ENCODE measurements at regions of chr3 and their contacts with region 1.

Region 1: GRCh38 chr3:72102112-72102616 is 317.2 kb upstream of the PROK2 start:
- DNase-seq: peak in 2 of 35 experiments; percentile 6 to 40
- ATAC-seq: no peak
- H3K4me3 ChIP-seq: no peak overlapping the region
- H3K4me3 Mint-ChIP-seq: no peak overlapping the region
- H3K27ac ChIP-seq: no peak overlapping the region
- H3K27ac Mint-ChIP-seq: no peak overlapping the region
- H3K4me1 ChIP-seq: peaks cover 13 to 15% of the 10 kb centered on the region in 2 experiments
- H3K4me1 Mint-ChIP-seq: peaks cover 24 to 30% (median 29%) of the 10 kb centered on the region in 3 donors
- H3K27me3 ChIP-seq: peaks cover 0 to 22% of the 10 kb centered on the region in 2 experiments
- H3K27me3 Mint-ChIP-seq: peaks cover 1 to 3% of the 10 kb centered on the region in 2 donors

Region 2: GRCh38 chr3:72013084-72013483 is 89.1 kb before region 1 on chr3:
- CTCF ChIA-PET with region 1: interaction called in 1 of 2 experiments, 10 read pairs
- POLR2A ChIA-PET with region 1: no interaction called
- DNase-seq: no peak
- ATAC-seq: no peak
- H3K4me3 ChIP-seq: no peak overlapping the region
- H3K4me3 Mint-ChIP-seq: no peak overlapping the region
- H3K27ac ChIP-seq: no peak overlapping the region
- H3K27ac Mint-ChIP-seq: no peak overlapping the region
- H3K4me1 ChIP-seq: no peaks in the 10 kb centered on the region
- H3K4me1 Mint-ChIP-seq: no peaks in the 10 kb centered on the region
- H3K27me3 ChIP-seq: no peaks in the 10 kb centered on the region
- H3K27me3 Mint-ChIP-seq: peaks cover 0 to 5% of the 10 kb centered on the region in 2 donors

Region 3: GRCh38 chr3:72085036-72085435 is 17.1 kb before region 1 on chr3:
- CTCF ChIA-PET with region 1: no interaction called
- POLR2A ChIA-PET with region 1: interaction called in 1 of 2 experiments, 10 read pairs
- DNase-seq: no peak
- ATAC-seq: no peak
- H3K4me3 ChIP-seq: no peak overlapping the region
- H3K4me3 Mint-ChIP-seq: no peak overlapping the region
- H3K27ac ChIP-seq: no peak overlapping the region
- H3K27ac Mint-ChIP-seq: no peak overlapping the region
- H3K4me1 ChIP-seq: peaks cover 0 to 3% of the 10 kb centered on the region in 2 experiments
- H3K4me1 Mint-ChIP-seq: peaks cover 9 to 18% (median 13%) of the 10 kb centered on the region in 3 donors
- H3K27me3 ChIP-seq: peaks cover 0 to 17% of the 10 kb centered on the region in 2 experiments
- H3K27me3 Mint-ChIP-seq: peaks cover under 1 to 4% of the 10 kb centered on the region in 2 donors